Caco-2 (cell line): ENCODE measurements at regions of chr4 and their contacts with region 1.

Region 1: DNA sequence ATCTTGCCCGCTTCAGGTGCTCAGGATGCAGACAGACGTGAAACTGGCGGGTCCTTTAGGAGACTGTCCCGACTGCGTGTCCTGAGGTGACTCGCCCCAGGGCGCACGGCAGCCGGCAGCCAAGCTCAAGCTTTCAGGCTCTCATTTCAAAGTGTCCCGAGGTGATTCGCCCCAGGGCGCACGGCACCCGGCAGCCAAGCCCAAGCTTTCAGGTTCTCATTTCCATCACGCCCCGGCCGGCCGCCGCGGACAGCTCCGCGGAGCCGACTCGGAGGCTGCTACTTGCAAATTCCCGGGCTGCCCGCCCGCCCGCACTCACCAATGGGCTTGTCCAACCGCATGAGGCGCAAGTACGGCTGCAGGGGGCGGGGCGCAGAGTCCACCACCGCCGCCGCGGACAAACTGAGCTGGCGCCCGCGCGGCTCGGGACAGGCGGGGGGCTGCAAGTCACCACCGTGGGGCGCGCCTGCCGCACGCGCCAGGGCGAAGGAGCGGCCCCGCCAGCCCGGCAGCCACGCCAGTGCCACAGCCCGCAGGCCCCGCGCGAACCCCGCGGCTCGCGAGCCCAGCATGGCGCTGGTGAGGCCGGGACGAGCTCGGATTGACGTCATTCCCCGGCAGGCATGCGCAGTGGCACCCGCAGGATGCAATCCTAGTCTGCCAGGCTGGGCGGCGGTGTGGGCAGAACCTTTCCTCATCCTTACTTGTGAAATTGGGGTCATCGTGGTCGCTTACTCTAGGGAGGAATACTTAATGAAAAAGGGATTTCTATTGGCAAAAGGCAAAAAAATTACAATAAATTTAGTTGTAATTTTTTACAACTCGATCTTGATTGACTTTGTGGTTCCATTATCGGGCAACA is at the start of gene COQ2:
- DNase-seq: peak; percentile 94 to 95
- H3K4me3 ChIP-seq: peak within 1 kb of the TSS; percentile 70
- H3K4me3 Mint-ChIP-seq: peak within 1 kb of the TSS; percentile 89
- H3K27ac Mint-ChIP-seq: peak within 1 kb of the TSS; percentile 92
- H3K4me1 ChIP-seq: peaks cover 19% of the 10 kb centered on the region; the same call in 1 of the 2 replicates
- H3K4me1 Mint-ChIP-seq: peaks cover 7% of the 10 kb centered on the region
- H3K27me3 ChIP-seq: no peaks in the 10 kb centered on the region
- H3K27me3 Mint-ChIP-seq: no peaks in the 10 kb centered on the region
- CTCF ChIP-seq: peak in 1 of 2 experiments; percentile 9
- total RNA-seq, gene COQ2: 22.0 and 24.2 TPM in 2 replicates

Region 2: DNA sequence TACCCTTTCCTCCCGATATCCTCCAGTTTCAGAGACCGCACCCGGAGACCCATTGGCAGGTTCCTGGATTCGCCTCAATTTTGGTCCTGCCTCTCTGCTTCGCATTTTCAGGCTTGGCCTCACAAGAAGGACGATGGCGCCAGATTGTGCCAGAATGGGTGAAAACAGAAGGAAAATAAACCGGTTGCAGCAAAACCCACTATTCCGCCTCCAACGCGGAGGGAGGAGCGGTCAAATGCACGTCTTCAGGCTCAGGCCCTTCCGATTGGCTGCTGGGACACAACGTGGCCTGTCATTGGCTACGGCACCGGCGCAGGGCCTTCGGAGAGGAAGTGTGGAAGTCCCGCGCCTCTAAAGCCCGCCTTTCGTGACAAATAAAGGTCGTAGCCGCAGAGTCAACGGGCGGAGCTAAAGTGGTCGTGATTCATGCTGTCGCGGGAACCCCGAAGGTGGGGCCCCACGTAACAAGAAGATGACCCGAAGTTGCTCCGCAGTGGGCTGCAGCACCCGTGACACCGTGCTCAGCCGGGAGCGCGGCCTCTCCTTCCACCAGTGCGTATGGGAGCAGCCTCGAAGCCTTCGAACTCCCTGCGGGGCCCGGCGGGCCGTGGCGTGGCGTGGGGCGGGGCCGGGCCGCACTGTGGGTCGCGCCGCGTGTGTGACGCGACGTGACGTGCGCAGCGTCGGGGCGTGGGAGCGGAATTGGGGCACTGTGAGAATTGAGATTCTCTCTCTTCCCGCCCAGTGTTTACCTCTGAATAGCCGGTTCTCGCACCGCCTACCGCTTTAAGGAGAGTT is 383.9 kb before region 1 on chr4 and contains the start of gene THAP9:
- CTCF ChIA-PET with region 1: no interaction called
- POLR2A ChIA-PET with region 1: no interaction called
- intact Hi-C with region 1: loop called (anchors 10 kb)
- DNase-seq: peak; percentile 97 to 99
- H3K4me3 ChIP-seq: peak within 1 kb of the TSS; percentile 69
- H3K4me3 Mint-ChIP-seq: no peak within 1 kb of the TSS
- H3K27ac Mint-ChIP-seq: no peak within 1 kb of the TSS
- H3K4me1 ChIP-seq: peaks cover 12% of the 10 kb centered on the region; the same call in 1 of the 2 replicates
- H3K4me1 Mint-ChIP-seq: no peaks in the 10 kb centered on the region
- H3K27me3 ChIP-seq: no peaks in the 10 kb centered on the region
- H3K27me3 Mint-ChIP-seq: no peaks in the 10 kb centered on the region
- CTCF ChIP-seq: no peak
- total RNA-seq, gene THAP9: 6.8 and 7.9 TPM in 2 replicates

Region 3: DNA sequence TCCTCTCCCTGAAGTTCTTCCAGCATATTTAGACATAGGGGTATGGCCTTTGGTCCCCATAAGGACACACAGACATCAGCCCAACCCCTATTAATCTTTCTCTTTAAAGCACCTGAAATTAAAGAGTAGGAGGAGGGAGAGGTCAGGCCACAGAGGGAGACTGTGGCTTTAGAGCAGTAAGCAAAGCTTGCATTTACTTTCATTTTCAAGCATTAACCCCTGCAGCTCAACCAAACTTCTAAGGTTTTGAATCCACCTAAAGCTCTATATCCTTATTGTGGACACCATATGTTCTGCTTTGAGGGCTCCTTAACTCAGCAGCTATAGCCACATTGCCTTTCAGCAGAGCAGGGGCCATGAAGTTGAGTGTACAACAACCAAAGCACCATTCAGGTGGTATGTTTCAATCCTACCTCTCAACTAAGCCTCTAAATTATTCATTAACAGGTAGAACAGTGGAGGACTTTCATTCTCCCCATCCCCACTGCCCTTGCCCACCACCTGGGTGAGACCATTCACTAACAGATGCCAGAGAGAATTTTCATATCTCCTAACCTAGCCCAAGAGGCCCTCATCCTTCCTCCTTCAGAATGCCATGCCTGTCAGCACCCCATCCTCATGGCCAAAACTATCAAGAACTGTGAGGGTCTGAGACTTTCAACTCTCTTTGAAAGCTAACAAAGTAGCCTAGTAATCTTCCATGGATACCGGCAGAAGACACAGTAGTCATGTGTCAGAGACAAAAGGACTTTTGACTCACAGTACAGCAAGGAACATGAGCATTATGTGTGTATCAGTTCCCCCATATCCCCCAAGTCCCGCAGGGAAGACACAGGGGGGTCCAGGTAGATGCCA is 294.6 kb before region 1 on chr4:
- CTCF ChIA-PET with region 1: no interaction called
- POLR2A ChIA-PET with region 1: no interaction called
- intact Hi-C with region 1: no loop called
- DNase-seq: no peak
- H3K4me3 ChIP-seq: no peak overlapping the region
- H3K4me3 Mint-ChIP-seq: no peak overlapping the region
- H3K27ac Mint-ChIP-seq: peak overlapping the region; percentile 57
- H3K4me1 ChIP-seq: peaks cover 20% of the 10 kb centered on the region
- H3K4me1 Mint-ChIP-seq: no peaks in the 10 kb centered on the region
- H3K27me3 ChIP-seq: no peaks in the 10 kb centered on the region
- H3K27me3 Mint-ChIP-seq: no peaks in the 10 kb centered on the region
- CTCF ChIP-seq: no peak

Region 4: GRCh38 chr4:83074086-83074704 is 210.2 kb before region 1 on chr4:
- CTCF ChIA-PET with region 1: interaction called, 4 read pairs
- POLR2A ChIA-PET with region 1: interaction called, 4 read pairs
- intact Hi-C with region 1: loop called (anchors 2 kb)
- DNase-seq: peak; percentile 46 to 66
- H3K4me3 ChIP-seq: no peak overlapping the region
- H3K4me3 Mint-ChIP-seq: no peak overlapping the region
- H3K27ac Mint-ChIP-seq: no peak overlapping the region
- H3K4me1 ChIP-seq: no peaks in the 10 kb centered on the region
- H3K4me1 Mint-ChIP-seq: no peaks in the 10 kb centered on the region
- H3K27me3 ChIP-seq: no peaks in the 10 kb centered on the region
- H3K27me3 Mint-ChIP-seq: no peaks in the 10 kb centered on the region
- CTCF ChIP-seq: peak; percentile 43 to 55

Region 5: GRCh38 chr4:83231620-83232076 is 52.8 kb before region 1 on chr4:
- CTCF ChIA-PET with region 1: no interaction called
- POLR2A ChIA-PET with region 1: no interaction called
- intact Hi-C with region 1: no loop called
- DNase-seq: no peak
- H3K4me3 ChIP-seq: no peak overlapping the region
- H3K4me3 Mint-ChIP-seq: no peak overlapping the region
- H3K27ac Mint-ChIP-seq: no peak overlapping the region
- H3K4me1 ChIP-seq: peaks cover 9% of the 10 kb centered on the region
- H3K4me1 Mint-ChIP-seq: peaks cover 7% of the 10 kb centered on the region
- H3K27me3 ChIP-seq: no peaks in the 10 kb centered on the region
- H3K27me3 Mint-ChIP-seq: no peaks in the 10 kb centered on the region
- CTCF ChIP-seq: no peak

Region 6: DNA sequence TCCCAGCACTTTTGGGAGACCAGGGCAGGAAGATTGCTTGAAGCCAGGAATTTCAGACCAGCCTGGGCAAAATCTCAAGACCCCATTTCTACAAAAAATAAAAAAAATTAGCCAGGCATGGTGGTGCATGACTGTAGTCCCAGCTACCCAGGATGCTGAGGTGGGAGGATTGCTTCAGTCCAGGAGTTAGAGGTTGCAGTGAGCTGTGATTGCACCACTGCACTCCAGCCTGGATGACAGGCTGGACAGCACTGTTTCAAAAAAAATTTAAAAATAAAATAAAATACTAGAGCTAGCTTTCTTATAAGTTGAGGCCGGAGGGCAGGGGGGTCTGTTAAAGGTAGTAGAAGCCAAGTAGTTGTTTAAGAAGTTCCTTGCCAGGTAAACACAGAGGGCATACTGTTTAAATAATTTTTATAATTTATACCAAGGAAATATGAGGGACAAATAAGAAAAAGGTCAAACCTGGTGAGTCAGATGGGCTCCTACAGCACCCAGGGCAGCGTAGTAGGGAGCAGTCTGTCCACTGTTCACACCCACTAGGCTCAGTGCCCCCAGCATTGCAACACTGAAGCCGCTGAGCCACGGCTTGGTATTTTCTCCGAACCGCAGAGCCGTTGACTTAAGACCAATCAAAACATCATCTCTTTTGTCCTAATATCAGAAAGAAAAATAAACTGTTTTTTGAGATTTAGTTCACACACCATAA is 17.1 kb before region 1 on chr4:
- CTCF ChIA-PET with region 1: no interaction called
- POLR2A ChIA-PET with region 1: no interaction called
- intact Hi-C with region 1: no loop called
- DNase-seq: no peak
- H3K4me3 ChIP-seq: no peak overlapping the region
- H3K4me3 Mint-ChIP-seq: no peak overlapping the region
- H3K27ac Mint-ChIP-seq: no peak overlapping the region
- H3K4me1 ChIP-seq: no peaks in the 10 kb centered on the region
- H3K4me1 Mint-ChIP-seq: no peaks in the 10 kb centered on the region
- H3K27me3 ChIP-seq: no peaks in the 10 kb centered on the region
- H3K27me3 Mint-ChIP-seq: no peaks in the 10 kb centered on the region
- CTCF ChIP-seq: no peak

Region 7: GRCh38 chr4:83328521-83329187 is 44.2 kb after region 1 on chr4:
- CTCF ChIA-PET with region 1: no interaction called
- POLR2A ChIA-PET with region 1: no interaction called
- intact Hi-C with region 1: loop called (anchors 2 kb)
- DNase-seq: peak in 1 of 2 experiments; percentile 18
- H3K4me3 ChIP-seq: no peak overlapping the region
- H3K4me3 Mint-ChIP-seq: no peak overlapping the region
- H3K27ac Mint-ChIP-seq: no peak overlapping the region
- H3K4me1 ChIP-seq: no peaks in the 10 kb centered on the region
- H3K4me1 Mint-ChIP-seq: no peaks in the 10 kb centered on the region
- H3K27me3 ChIP-seq: no peaks in the 10 kb centered on the region; the same call in 1 of the 2 replicates
- H3K27me3 Mint-ChIP-seq: no peaks in the 10 kb centered on the region
- CTCF ChIP-seq: no peak

Region 8: DNA sequence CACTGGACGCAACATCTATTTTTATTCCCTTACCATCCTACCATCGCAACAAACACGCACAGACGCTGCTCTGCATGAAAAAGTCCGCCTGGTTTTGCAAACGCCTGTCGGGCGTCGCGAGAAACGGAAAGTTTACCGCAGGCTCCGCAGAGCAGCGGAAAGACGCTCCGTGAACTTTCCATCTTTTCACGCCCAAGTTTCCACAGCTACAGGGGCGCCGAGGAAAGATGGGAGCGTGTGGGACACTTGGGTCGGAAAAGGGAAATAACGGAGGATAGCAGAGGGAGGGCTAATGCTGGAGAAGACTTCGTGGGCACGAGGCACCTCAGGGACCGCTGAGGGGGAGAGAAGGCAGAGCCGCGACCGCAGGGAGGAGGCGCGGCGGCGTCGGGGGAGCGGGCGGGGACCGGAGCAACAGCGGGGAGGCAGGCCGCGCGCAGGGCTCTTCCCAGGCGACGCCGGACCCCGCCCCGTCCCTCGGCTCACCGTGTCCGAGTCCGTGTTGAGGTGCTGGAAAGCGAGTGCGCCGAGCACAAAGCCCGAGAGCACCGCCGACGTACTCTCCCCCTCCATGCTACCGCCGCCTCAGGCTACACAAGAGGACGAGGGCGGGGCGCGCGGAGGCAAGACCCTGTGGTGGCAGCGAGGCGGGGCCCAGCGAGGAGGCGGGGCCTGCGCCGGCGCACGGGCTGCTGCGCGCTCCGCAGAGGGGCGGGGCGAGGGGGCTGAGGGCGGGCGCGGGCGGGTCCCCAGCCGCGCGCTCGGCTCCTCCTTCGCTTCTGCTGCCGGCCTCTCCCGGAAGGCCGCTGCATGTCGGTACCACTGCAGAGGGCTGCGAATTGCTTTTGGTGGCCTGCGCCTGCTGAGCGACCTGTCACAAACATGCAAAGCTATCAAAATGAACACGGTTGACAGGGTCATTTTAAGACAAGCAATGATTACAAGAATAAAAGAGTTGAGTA is 200.4 kb after region 1 on chr4 and contains the start of gene ABRAXAS1:
- CTCF ChIA-PET with region 1: no interaction called
- POLR2A ChIA-PET with region 1: no interaction called
- intact Hi-C with region 1: loop called (anchors 1 kb)
- DNase-seq: peak; percentile 91 to 94
- H3K4me3 ChIP-seq: peak within 1 kb of the TSS; percentile 89
- H3K4me3 Mint-ChIP-seq: peak within 1 kb of the TSS; percentile 90
- H3K27ac Mint-ChIP-seq: peak within 1 kb of the TSS; percentile 78
- H3K4me1 ChIP-seq: peaks cover 18% of the 10 kb centered on the region
- H3K4me1 Mint-ChIP-seq: peaks cover 10% of the 10 kb centered on the region
- H3K27me3 ChIP-seq: no peaks in the 10 kb centered on the region
- H3K27me3 Mint-ChIP-seq: no peaks in the 10 kb centered on the region
- CTCF ChIP-seq: no peak
- total RNA-seq, gene ABRAXAS1: 18.2 and 19.9 TPM in 2 replicates